OCI-LY7 (cell line): ENCODE measurements at regions of chr2 and their contacts with region 1.

Region 1: GRCh38 chr2:182064019-182064778 is 78.5 kb downstream of the PPP1R1C start:
- DNase-seq: no peak
- H3K4me3 ChIP-seq: no peak overlapping the region
- H3K27ac ChIP-seq: no peak overlapping the region
- H3K4me1 ChIP-seq: no peaks in the 10 kb centered on the region
- CTCF ChIP-seq: no peak

Region 2: GRCh38 chr2:182077451-182078142 is 13.4 kb after region 1 on chr2:
- CTCF ChIA-PET with region 1: interaction called, 3 read pairs
- POLR2A ChIA-PET with region 1: interaction called, 10 read pairs
- intact Hi-C with region 1: no loop called
- DNase-seq: peak; percentile 64
- H3K4me3 ChIP-seq: no peak overlapping the region
- H3K27ac ChIP-seq: no peak overlapping the region
- H3K4me1 ChIP-seq: no peaks in the 10 kb centered on the region
- CTCF ChIP-seq: peak; percentile 78

Region 3: DNA sequence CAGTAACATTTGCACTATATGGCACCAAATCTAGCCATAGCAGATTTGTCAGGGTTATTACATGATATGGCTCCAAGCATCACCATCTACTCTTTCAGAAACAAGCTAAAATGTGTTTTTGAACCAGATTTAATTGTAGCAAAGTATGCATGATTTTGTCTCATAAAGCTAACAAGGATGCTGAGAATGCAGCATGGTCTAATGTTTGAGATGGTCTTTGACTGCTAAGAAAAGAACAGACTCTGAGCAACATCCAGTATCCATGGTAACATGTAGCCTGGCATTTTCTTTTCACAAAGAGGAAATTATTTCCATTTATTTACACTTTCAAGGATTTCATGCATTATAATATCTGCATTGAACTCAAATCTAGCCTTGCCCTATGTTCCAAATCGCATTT is 156.1 kb after region 1 on chr2:
- CTCF ChIA-PET with region 1: no interaction called
- POLR2A ChIA-PET with region 1: no interaction called
- intact Hi-C with region 1: no loop called
- DNase-seq: no peak
- H3K4me3 ChIP-seq: no peak overlapping the region
- H3K27ac ChIP-seq: no peak overlapping the region
- H3K4me1 ChIP-seq: no peaks in the 10 kb centered on the region
- CTCF ChIP-seq: no peak